ENCODE measurements at regions of chr7 and their contacts with region 1.

Region 1: GRCh38 chr7:100705753-100706671 is at the start of gene POP7:
- DNase-seq: peak; percentile 95 to 99 (median 97)
- ATAC-seq: peak; percentile 97
- H3K4me3 ChIP-seq: peak within 1 kb of the TSS; percentile 85
- H3K4me3 Mint-ChIP-seq: peak within 1 kb of the TSS; percentile 88 to 97 (median 95)
- H3K27ac ChIP-seq: peak within 1 kb of the TSS; percentile 91
- H3K27ac Mint-ChIP-seq: peak within 1 kb of the TSS; percentile 88 to 96 (median 93)
- H3K4me1 ChIP-seq: peaks cover 9 to 12% of the 10 kb centered on the region in 2 donors
- H3K4me1 Mint-ChIP-seq: peaks cover 8 to 15% (median 13%) of the 10 kb centered on the region in 7 donors
- H3K27me3 ChIP-seq: no peaks in the 10 kb centered on the region
- H3K27me3 Mint-ChIP-seq: peaks cover 0 to 13% (median 3%) of the 10 kb centered on the region in 5 donors
- total RNA-seq, gene POP7: 8.9 to 38.2 (median 15.0) TPM

Region 2: DNA sequence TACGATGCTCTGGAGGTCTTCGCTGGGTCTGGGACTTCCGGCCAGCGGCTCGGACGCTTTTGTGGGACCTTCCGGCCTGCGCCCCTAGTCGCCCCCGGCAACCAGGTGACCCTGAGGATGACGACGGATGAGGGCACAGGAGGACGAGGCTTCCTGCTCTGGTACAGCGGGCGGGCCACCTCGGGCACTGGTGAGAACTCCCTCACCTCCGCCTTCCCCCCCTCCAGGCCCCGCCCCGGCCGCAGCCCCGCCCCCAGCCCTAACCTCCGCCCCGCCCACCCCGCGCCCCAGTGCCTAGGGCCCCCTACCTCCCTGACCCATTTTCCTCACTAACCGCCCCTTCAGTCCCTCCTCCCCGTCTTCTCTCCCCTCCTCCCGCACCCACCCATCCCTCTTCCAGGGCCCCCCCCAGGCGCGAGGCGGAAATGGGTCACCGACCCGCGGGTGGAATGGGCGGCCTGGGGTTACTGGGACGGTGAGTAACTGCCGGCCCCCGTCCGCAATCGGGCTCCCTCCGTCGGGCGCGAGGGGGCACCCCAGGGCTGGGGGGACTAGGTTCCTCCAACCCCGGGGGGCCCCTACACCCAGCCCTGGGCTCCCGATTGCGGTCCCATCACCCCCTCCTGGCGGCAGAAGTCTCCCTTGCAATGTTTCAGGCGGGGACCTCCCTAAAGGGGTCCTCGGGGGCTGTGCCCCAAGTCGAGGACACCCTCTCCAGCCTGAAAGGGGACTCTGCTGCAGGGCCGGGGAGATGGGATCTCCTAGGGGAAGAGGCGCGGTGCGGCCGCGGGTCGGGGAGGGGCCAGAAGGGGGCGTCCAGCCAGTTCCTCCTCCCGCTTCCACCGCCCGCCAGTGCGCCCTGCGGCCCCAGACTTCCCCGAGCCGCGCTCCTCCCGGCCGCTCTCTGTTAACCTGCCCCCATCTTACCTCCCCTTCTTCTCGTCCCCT is 101.7 kb before region 1 on chr7:
- CTCF ChIA-PET with region 1: no interaction called
- POLR2A ChIA-PET with region 1: interaction called, 3 read pairs
- intact Hi-C with region 1: loop called (anchors 1 to 2 kb)
- DNase-seq: peak in 8 of 9 donors; percentile 47 to 81 (median 59)
- ATAC-seq: peak; percentile 81
- H3K4me3 ChIP-seq: peak overlapping the region; percentile 70
- H3K4me3 Mint-ChIP-seq: peak overlapping the region; percentile 79 to 94 (median 87)
- H3K27ac ChIP-seq: peak overlapping the region; percentile 67
- H3K27ac Mint-ChIP-seq: peak overlapping the region; percentile 21 to 92 (median 84)
- H3K4me1 ChIP-seq: peaks cover 6 to 10% of the 10 kb centered on the region in 2 donors
- H3K4me1 Mint-ChIP-seq: peaks cover 7 to 35% (median 16%) of the 10 kb centered on the region in 7 donors
- H3K27me3 ChIP-seq: no peaks in the 10 kb centered on the region
- H3K27me3 Mint-ChIP-seq: peaks cover 0 to 15% (median 0%) of the 10 kb centered on the region in 5 donors

Region 3: DNA sequence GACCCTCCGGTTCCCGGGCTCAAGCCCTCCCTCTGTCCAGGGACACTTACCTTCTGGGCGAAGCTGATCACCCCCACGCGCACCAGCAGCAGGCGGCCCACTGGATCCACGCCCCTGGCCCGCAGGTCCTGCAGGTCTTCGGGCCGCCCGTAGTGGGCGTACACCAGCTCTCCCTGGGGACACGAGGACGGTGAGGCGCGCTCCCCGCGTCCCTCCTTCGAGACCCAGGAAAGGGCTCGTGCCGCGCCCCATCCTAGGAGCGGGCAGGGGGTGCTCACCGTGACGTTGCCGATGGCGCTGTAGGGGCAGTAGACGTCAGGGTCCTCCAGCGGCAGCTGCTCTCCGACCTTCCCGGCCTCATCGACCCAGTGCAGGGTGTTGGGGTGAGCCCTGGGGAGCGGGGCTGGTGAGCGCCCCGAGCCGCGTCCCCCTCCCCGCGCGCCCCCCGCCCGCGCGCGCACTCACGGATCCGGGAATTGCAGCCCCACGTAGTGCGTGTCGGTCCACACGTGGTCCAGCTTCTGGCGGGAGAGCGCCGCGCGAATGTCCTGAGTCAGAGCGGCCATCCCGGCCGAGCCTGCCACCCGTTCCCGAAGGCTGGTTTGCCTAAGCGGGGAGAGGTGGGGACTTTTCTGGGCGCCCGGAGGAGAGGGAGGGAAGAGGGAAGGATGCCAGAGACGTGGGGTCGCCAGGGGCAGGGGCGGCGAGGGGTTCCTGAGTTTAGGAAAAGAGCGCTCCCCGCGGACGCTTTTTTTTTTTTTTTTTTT is 72.9 kb before region 1 on chr7:
- CTCF ChIA-PET with region 1: interaction called, 7 read pairs
- POLR2A ChIA-PET with region 1: no interaction called
- intact Hi-C with region 1: loop called in 1 of 2 experiments (anchors 1 kb)
- DNase-seq: peak in 8 of 9 donors; percentile 39 to 72 (median 45)
- ATAC-seq: peak; percentile 79
- H3K4me3 ChIP-seq: peak overlapping the region; percentile 68
- H3K4me3 Mint-ChIP-seq: peak overlapping the region; percentile 79 to 89 (median 84)
- H3K27ac ChIP-seq: peak overlapping the region; percentile 56
- H3K27ac Mint-ChIP-seq: peak overlapping the region in 7 of 9 donors; percentile 40 to 92 (median 63)
- H3K4me1 ChIP-seq: no peaks in the 10 kb centered on the region
- H3K4me1 Mint-ChIP-seq: peaks cover 10 to 42% (median 25%) of the 10 kb centered on the region in 7 donors
- H3K27me3 ChIP-seq: no peaks in the 10 kb centered on the region
- H3K27me3 Mint-ChIP-seq: peaks cover 0 to 4% (median 0%) of the 10 kb centered on the region in 5 donors

Region 4: DNA sequence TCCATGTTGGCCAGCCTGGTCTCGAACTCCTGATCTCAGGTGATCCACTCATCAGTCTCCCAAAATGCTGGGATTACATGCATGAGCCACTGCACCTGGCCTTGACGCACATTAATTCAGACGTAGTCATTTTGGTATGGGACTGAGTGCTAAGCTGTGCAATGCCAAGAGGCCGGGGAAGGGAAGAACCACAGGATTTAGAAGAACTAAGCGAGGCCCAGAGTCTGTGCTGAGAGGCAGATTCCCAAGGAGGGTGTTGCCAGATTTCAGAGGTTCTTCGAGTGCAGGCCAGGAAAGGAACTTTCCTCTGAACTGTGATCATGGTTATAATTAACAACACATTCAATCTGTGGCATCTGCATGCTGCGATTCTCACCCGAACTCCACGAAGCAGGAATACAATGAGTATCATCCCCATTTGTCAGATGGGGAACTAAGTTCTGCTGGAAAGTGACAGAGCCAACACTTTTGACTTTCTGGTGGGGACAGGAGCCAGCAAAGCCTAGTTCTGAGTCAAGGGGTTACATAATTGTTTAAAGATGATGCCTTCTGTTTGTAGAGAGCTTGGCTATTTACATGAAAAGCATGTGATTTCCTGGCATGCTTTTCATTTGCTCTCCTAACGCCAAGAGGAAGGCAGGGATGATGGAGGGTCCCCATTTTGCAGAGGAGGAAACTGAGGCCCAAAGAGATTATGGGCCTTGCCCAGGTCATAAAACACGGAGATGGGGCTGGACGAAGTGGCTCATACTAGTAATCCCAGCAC is 21.2 kb after region 1 on chr7:
- CTCF ChIA-PET with region 1: interaction called, 19 read pairs
- POLR2A ChIA-PET with region 1: interaction called, 3 read pairs
- intact Hi-C with region 1: loop called (anchors 1 kb)
- DNase-seq: no peak
- ATAC-seq: no peak
- H3K4me3 ChIP-seq: no peak overlapping the region
- H3K4me3 Mint-ChIP-seq: no peak overlapping the region
- H3K27ac ChIP-seq: no peak overlapping the region
- H3K27ac Mint-ChIP-seq: peak overlapping the region in 1 of 9 donors; percentile 22
- H3K4me1 ChIP-seq: no peaks in the 10 kb centered on the region
- H3K4me1 Mint-ChIP-seq: peaks cover 0 to 5% (median 0%) of the 10 kb centered on the region in 7 donors
- H3K27me3 ChIP-seq: peaks cover 0 to 4% of the 10 kb centered on the region in 2 donors
- H3K27me3 Mint-ChIP-seq: peaks cover 16 to 31% (median 21%) of the 10 kb centered on the region in 5 donors

Region 5: DNA sequence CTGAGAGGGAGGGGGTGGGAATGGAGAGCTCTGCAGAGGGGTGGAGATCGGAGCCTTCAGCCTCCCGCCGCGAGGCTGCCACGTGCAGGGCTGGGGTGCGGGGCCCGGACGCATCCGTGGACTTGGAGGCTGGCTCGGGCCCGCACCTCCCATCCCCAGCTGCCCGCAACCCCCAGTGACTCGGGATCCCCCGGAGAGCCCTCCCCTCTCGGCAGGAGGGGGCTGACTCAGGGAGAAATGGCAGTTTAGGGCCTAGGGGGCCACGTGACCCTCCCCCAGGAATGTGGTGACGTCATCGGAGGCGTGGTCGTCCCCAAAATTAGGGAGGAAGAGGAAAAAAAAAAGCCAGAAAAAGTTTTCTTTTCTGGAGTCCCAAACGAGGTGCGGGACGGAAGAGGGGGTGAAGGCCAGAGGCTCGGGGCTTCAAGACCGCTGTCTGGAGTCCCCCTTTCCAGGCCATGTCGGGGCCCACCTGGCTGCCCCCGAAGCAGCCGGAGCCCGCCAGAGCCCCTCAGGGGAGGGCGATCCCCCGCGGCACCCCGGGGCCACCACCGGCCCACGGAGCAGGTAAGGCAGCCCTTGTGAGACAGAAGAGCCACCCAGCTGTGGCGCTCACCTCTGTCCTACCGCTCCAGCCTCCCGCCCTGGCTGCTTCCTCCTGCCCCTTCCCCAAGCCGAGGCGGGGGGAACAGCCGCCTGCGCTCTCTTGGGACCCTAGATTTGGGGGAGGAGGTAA is 161.2 kb after region 1 on chr7 and contains the start of gene TRIP6:
- CTCF ChIA-PET with region 1: no interaction called
- POLR2A ChIA-PET with region 1: no interaction called
- intact Hi-C with region 1: loop called in 1 of 2 experiments (anchors 5 kb)
- DNase-seq: peak in 4 of 9 donors; percentile 18 to 83 (median 36)
- ATAC-seq: peak; percentile 44
- H3K4me3 ChIP-seq: peak within 1 kb of the TSS; percentile 46
- H3K4me3 Mint-ChIP-seq: peak within 1 kb of the TSS; percentile 69 to 92 (median 80)
- H3K27ac ChIP-seq: peak within 1 kb of the TSS; percentile 80
- H3K27ac Mint-ChIP-seq: peak within 1 kb of the TSS; percentile 62 to 95 (median 84)
- H3K4me1 ChIP-seq: peaks cover 0 to 25% of the 10 kb centered on the region in 2 donors
- H3K4me1 Mint-ChIP-seq: peaks cover 0 to 17% (median 11%) of the 10 kb centered on the region in 7 donors
- H3K27me3 ChIP-seq: no peaks in the 10 kb centered on the region
- H3K27me3 Mint-ChIP-seq: no peaks in the 10 kb centered on the region
- total RNA-seq, gene TRIP6: 8.0 to 28.1 (median 10.4) TPM